Tibial artery (tissue), 4 donors: ENCODE measurements at regions of chr4 and their contacts with region 1.

Region 1: DNA sequence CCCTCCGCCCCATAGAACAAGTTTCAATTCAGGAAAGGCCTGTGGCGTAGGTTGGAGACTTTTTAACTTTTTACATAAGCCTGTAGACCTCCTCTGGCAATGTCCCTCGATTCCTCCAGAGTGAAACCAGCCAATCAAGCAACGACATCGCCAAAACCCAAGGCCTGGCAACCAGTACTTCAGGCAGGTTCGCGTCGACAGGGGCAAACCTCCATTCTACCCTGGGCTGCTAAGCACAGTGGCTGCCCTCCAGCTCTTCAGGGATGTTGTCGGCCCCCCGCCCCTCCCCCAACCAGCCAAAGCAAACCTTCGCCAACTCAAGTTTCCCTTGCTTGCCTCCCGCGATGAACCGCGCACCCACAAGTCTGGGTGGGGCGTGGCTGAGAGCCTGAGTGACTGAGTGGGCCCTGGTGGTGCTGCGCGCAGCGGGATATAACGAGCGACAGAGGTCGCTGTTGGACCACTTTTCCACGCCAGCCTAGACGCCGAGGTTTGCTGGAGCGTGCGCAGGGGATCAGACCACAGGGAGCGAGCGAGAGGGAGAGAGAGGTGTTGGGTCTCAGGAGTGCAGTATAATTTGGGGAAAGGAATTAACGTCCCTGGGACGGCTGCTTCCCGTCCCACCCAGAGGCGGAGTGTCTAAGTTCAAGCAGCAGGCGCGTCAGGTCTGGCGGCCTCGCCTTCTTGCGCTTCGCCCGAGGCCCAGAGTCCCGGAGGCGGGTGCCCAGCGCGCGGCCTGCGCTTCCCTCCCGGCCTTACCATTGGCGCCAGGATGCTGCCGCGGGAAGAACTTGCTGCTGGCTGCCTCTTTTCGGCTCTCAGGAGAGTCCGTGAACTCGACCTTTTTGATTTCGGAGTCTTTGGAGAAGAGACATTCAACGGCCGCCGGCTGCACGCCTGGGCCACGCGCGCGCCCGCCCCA is 9.0 kb upstream of the PITX2 start:
- DNase-seq: peak in 1 of 2 donors; percentile 43
- H3K4me3 ChIP-seq: peak overlapping the region; percentile 23 to 45
- H3K27ac ChIP-seq: no peak overlapping the region
- H3K4me1 ChIP-seq: peaks cover 0 to 47% (median 34%) of the 10 kb centered on the region in 4 donors
- H3K27me3 ChIP-seq: peaks cover 0 to 99% of the 10 kb centered on the region in 2 donors
- CTCF ChIP-seq: peak; percentile 71 to 72

Region 2: GRCh38 chr4:110644008-110644407 is 12.2 kb after region 1 on chr4:
- intact Hi-C with region 1: no loop called
- DNase-seq: no peak
- H3K4me3 ChIP-seq: no peak overlapping the region
- H3K27ac ChIP-seq: no peak overlapping the region
- H3K4me1 ChIP-seq: no peaks in the 10 kb centered on the region
- H3K27me3 ChIP-seq: peaks cover 0 to 46% of the 10 kb centered on the region in 2 donors
- CTCF ChIP-seq: no peak

Region 3: GRCh38 chr4:110808351-110808878 is 176.6 kb after region 1 on chr4:
- intact Hi-C with region 1: no loop called
- DNase-seq: no peak
- H3K4me3 ChIP-seq: no peak overlapping the region
- H3K27ac ChIP-seq: no peak overlapping the region
- H3K4me1 ChIP-seq: no peaks in the 10 kb centered on the region
- H3K27me3 ChIP-seq: no peaks in the 10 kb centered on the region
- CTCF ChIP-seq: no peak

Region 4: DNA sequence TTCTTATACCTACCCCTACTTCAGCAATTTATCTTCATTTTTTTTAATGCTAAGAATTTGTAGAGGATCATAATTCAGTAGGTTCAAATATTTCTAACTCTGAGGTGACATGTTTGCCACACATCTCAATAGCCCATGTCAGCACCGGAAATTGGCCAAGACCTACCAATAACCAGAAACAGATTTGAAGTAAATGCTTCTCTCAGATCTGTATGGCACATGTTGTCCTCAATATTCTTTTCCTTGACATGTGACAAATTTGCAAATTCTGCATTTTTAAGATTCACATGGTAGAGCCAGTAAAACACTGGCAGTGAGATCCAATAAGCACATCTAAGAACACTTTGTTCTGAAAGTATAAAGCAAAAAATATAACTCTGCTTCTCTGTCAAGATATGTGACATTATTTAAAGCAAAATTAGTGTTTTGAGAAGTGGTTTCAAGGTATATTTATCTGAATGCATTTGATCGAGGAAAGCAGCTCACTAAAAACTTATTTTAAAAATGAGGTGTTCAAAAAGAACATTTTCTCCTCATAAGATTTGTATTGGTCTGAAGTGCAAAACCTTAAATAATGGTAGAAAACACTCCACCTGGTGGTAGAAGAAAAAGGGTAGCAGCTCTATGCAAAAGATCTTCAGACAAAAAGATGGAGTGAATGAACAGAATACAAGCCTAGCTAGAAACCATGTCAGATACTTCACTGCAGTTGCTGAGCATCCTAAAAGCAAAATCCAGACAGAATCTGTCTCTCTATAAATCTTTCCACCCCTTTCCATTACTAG is 999.6 kb after region 1 on chr4:
- intact Hi-C with region 1: loop called (anchors 5 kb)
- DNase-seq: no peak
- H3K4me3 ChIP-seq: no peak overlapping the region
- H3K27ac ChIP-seq: no peak overlapping the region
- H3K4me1 ChIP-seq: no peaks in the 10 kb centered on the region
- H3K27me3 ChIP-seq: peaks cover 0 to 11% of the 10 kb centered on the region in 2 donors
- CTCF ChIP-seq: no peak